ENCODE measurements at regions of chr12 and their contacts with region 1.

Region 1: DNA sequence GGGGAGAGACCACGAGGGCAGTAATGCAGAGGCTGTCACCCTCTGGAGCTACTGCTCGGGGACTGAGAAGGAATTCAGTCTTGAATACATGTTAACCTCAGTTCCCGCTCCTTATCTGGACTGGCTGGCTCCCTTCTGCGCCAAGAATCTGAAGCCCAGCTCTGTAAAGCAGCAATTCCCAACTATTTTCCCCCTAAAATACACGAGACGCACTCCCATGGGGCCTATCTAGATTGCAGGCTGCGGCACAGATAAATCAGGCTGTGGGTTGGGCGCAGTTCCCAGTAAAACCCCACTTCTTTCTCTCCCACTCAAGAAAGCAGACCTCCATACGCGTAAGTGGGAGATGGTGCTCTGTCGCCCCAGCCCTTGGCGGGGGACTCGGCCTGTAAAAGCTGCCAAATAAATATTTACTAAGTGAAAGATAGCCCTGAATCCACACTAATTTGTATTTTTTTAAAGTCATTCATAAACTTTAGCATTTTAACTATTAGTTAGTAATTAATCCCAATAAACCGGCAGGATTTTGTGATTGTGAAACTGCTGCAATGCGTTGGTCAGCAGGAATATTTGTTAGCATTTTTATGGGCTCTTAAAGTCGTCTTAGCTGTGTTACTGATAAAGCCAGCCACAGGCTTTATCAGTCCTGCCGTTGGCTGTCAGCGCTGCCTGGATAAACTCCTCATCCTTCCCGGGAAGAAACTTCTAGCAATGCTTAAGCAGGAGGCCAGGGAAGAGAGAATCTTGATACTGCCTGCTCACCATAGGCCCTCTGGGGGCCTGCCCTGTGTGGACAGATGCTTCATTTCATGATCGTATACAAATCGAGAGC is 17.8 kb downstream of the FBXL14 start:
- DNase-seq: no peak
- H3K4me3 ChIP-seq: peak overlapping the region; percentile 24 to 48 (median 26)
- H3K27ac ChIP-seq: peak overlapping the region; percentile 72 to 76
- H3K4me1 ChIP-seq: no peaks in the 10 kb centered on the region
- H3K27me3 ChIP-seq: no peaks in the 10 kb centered on the region
- CTCF ChIP-seq: no peak
- POLR2A ChIP-seq: no peak

Region 2: DNA sequence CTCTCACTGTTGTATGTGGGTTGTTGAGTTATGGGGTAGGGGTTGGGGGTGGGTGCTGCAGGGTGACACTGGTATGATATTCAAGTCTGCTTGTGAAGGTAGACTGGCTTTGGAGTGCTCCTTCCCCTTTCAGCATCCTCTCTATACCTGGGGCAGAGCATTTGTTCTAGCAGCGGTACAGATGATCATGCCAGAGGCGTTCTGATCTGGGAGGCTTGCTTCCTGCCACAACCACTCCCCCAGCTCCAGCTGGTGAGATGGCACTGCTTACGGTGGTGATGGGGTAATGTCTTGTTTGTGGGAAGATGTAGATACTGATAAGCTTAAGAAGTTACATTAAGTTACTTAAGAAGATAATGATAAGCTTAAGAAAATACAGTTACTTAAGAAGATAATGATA is 453.8 kb before region 1 on chr12:
- intact Hi-C with region 1: loop called (anchors 10 kb)
- DNase-seq: no peak
- H3K4me3 ChIP-seq: no peak overlapping the region
- H3K27ac ChIP-seq: no peak overlapping the region
- H3K4me1 ChIP-seq: no peaks in the 10 kb centered on the region
- H3K27me3 ChIP-seq: no peaks in the 10 kb centered on the region
- CTCF ChIP-seq: no peak
- POLR2A ChIP-seq: no peak

Region 3: GRCh38 chr12:1644534-1645438 is 68.2 kb after region 1 on chr12:
- intact Hi-C with region 1: no loop called
- DNase-seq: peak in 1 of 2 donors; percentile 76
- H3K4me3 ChIP-seq: no peak overlapping the region
- H3K27ac ChIP-seq: no peak overlapping the region
- H3K4me1 ChIP-seq: peaks cover 0 to 4% of the 10 kb centered on the region in 2 donors
- H3K27me3 ChIP-seq: no peaks in the 10 kb centered on the region
- CTCF ChIP-seq: no peak
- POLR2A ChIP-seq: no peak

Measured in breast epithelium (tissue), 4 donors.